Activated CD4-positive, alpha-beta memory T cell treated with anti-CD3 and anti-CD28 coated beads, Interleukin-2, amount 10 ng/mL, durations not matched to agents 7 days and 5 days (primary cell): ENCODE measurements at regions of chr9 and their contacts with region 1.

Region 1: DNA sequence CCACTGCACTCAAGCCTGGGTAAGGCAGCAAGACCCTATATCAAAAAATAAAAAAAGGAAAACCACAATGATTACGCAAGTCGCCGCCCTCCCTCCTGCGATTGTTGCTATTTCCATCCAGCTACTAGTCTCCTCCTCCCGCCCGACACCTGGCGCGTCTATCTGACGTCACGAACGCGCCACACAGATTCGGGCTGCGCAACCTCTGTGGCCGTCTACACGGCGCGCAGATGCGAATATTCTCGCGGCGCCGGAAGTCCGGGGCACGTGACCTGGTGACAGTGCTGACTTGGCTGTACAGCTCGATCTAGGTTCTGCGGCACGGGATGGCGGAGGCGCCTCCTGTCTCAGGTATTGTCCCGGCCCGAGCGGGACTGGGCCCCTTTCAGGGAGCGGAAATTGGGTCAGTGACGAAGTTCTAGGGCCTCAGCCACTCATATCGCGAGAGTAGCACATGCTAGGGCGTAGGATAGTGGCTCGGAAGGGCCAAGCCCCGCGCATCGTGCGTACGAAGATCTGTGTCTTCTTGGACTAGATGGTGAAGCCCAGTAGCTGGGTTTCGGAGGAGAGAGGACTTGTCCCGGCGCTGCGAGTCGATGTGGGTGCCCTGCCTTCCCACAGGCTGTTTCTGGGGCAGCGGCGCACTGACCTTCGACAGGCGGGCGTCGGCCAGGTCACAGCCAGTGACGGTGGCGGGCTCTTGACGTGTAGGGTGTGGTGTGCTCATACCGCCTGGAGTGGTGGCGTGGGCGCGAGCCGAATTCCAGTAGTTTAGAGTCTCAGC is at the start of gene NFX1:
- DNase-seq: peak; percentile 99
- H3K4me3 Mint-ChIP-seq: peak within 1 kb of the TSS; percentile 93
- H3K27ac Mint-ChIP-seq: peak within 1 kb of the TSS; percentile 99
- H3K4me1 Mint-ChIP-seq: peaks cover 59% of the 10 kb centered on the region
- H3K27me3 Mint-ChIP-seq: no peaks in the 10 kb centered on the region
- total RNA-seq, gene NFX1: 37.5 to 37.8 TPM

Region 2: GRCh38 chr9:33024966-33025571 is 265.4 kb before region 1 on chr9 and contains the start of gene DNAJA1:
- CTCF ChIA-PET with region 1: interaction called, 4 read pairs
- POLR2A ChIA-PET with region 1: interaction called, 18 read pairs
- DNase-seq: peak; percentile 95
- H3K4me3 Mint-ChIP-seq: peak within 1 kb of the TSS; percentile 96
- H3K27ac Mint-ChIP-seq: peak within 1 kb of the TSS; percentile 92
- H3K4me1 Mint-ChIP-seq: peaks cover 71% of the 10 kb centered on the region
- H3K27me3 Mint-ChIP-seq: no peaks in the 10 kb centered on the region
- total RNA-seq, gene DNAJA1: 141 to 142 TPM

Region 3: GRCh38 chr9:33167046-33167808 is 123.2 kb before region 1 on chr9 and contains the start of gene B4GALT1:
- CTCF ChIA-PET with region 1: interaction called, 3 read pairs
- POLR2A ChIA-PET with region 1: interaction called, 11 read pairs
- DNase-seq: peak; percentile 98
- H3K4me3 Mint-ChIP-seq: peak within 1 kb of the TSS; percentile 89
- H3K27ac Mint-ChIP-seq: peak within 1 kb of the TSS; percentile 94
- H3K4me1 Mint-ChIP-seq: peaks cover 60% of the 10 kb centered on the region
- H3K27me3 Mint-ChIP-seq: no peaks in the 10 kb centered on the region
- total RNA-seq, gene B4GALT1: 69.2 to 70.8 TPM

Region 4: GRCh38 chr9:33304362-33304761 is 13.9 kb after region 1 on chr9:
- CTCF ChIA-PET with region 1: interaction called, 4 read pairs
- POLR2A ChIA-PET with region 1: interaction called, 42 read pairs
- DNase-seq: no peak
- H3K4me3 Mint-ChIP-seq: no peak overlapping the region
- H3K27ac Mint-ChIP-seq: no peak overlapping the region
- H3K4me1 Mint-ChIP-seq: peaks cover 23% of the 10 kb centered on the region
- H3K27me3 Mint-ChIP-seq: no peaks in the 10 kb centered on the region

Region 5: DNA sequence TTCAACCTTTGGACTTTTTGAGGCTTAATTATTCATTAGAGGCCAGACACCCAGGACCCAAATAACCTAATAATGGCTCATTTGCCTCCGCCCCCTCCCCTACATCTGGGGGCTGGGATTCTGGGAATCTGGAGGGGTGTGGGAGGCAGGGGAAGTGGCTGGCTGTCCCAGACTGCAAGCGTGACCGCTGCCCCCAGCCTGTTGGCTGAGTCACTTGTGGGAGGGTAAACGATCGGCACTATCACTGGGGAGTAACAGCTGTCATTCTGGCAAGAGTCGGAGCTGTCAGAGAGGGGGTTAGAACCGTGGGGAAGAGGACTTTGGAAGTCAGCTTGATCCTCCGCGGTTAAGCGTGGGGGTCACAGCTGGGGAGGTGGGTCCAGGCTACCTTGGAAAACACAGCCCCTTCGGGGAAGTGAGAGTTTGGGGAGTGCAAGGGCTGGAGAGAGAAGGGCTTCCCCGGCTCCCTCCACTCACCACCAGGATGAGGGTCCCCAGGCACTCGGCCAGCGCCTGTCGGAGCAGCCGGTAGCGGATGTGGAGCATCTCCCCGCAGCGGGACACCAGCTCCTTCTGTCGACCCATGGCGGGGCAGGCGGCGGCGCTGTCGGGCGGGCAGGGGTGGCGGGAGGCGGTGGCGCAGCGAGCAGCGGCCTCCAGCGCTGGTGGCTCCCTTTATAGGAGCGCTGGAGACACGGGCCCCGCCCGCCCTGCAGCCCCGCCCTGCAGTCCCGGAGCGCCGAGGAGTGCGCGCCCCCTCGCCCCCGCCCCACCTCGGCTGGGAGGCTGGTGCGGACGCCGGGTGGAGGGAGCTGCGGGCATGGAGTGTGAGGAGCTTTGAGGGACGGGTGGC is 156.7 kb after region 1 on chr9 and contains the start of gene AQP3:
- CTCF ChIA-PET with region 1: interaction called, 6 read pairs
- POLR2A ChIA-PET with region 1: interaction called, 12 read pairs
- DNase-seq: peak; percentile 85
- H3K4me3 Mint-ChIP-seq: peak within 1 kb of the TSS; percentile 84
- H3K27ac Mint-ChIP-seq: peak within 1 kb of the TSS; percentile 94
- H3K4me1 Mint-ChIP-seq: peaks cover 64% of the 10 kb centered on the region
- H3K27me3 Mint-ChIP-seq: no peaks in the 10 kb centered on the region
- total RNA-seq, gene AQP3: 162 to 167 TPM

Region 6: DNA sequence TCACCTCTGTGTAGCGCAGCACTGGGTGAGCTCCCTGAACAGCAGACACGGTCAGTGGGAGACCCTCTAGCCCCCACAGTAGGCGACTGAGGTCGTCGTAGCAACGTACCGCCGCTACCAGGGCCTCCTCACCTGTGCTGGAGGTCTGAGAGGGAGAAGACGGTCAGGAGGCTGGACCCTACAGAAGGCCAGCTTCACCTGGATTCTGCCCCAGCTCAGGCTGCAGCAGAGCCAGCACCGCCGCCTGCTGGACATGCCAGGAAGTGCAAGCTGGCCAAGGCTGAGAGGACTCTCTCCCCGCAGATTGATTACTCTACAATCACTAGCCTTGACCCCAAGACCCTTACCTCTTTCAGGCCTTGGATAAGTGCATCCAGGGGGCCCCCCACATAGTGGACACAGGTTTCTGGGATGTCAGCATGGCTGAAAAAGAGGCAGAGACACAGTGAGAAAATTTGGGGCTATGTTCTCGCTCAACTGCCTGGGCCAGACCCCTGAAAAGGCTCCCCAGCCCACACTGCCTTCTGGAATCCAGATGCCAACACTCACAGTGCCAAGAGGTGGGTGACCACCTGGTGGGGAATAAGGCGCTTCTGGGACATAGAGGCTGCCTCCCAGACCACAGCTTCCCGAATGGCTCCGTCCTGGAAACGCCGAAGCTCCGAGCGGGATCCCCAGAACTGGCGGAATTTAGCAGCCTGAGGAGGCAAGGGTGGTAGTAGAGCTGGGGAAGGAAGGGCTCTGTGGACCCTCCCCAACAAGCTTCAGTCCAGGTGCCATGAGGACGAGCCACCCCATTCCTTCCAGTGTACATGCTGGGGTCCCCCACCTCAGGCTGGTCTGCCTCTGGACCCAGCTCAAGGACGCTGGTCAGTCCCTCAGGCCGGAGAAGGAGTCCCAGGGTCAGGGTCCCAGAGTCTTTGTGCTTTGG is 176.4 kb after region 1 on chr9:
- CTCF ChIA-PET with region 1: interaction called, 16 read pairs
- POLR2A ChIA-PET with region 1: no interaction called
- DNase-seq: peak; percentile 79
- H3K4me3 Mint-ChIP-seq: no peak overlapping the region
- H3K27ac Mint-ChIP-seq: no peak overlapping the region
- H3K4me1 Mint-ChIP-seq: peaks cover 9% of the 10 kb centered on the region
- H3K27me3 Mint-ChIP-seq: no peaks in the 10 kb centered on the region

Region 7: DNA sequence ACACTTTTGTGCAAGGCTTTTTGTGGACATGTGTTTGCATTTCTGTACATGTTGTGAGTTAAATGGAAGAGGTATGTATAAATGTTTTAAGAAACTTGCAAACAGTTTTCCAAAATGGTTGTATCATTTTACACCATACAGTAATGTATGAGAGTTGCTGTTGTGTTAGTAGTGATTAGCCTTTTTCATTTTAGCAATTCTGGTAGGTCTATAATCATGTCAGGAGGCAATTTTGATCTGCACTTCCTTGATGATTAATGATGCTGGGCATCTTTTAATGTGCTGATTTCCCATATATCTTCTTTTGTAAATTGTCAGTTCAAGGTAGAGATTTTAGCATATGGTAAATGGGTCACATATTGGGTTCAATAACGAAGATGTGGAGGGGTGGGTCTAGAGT is 320.9 kb after region 1 on chr9:
- CTCF ChIA-PET with region 1: no interaction called
- POLR2A ChIA-PET with region 1: no interaction called
- DNase-seq: no peak
- H3K4me3 Mint-ChIP-seq: no peak overlapping the region
- H3K27ac Mint-ChIP-seq: no peak overlapping the region
- H3K4me1 Mint-ChIP-seq: no peaks in the 10 kb centered on the region
- H3K27me3 Mint-ChIP-seq: peaks cover 51% of the 10 kb centered on the region